ENCODE measurements at regions of chr11 and their contacts with region 1.

Region 1: GRCh38 chr11:22539821-22540256 is 85.8 kb downstream of the FANCF start:
- DNase-seq: peak; percentile 31
- H3K4me3 ChIP-seq: no peak overlapping the region
- H3K27ac ChIP-seq: no peak overlapping the region
- H3K4me1 ChIP-seq: peaks cover 13% of the 10 kb centered on the region
- H3K27me3 ChIP-seq: no peaks in the 10 kb centered on the region
- CTCF ChIP-seq: peak; percentile 83 to 84

Region 2: GRCh38 chr11:22337596-22338485 is 202.0 kb before region 1 on chr11 and contains the start of gene SLC17A6:
- CTCF ChIA-PET with region 1: no interaction called
- dilution Hi-C with region 1: no loop called
- in situ Hi-C with region 1: loop called in 1 of 2 experiments (anchors 10 kb)
- intact Hi-C with region 1: loop called (anchors 1 kb)
- DNase-seq: peak; percentile 31
- H3K4me3 ChIP-seq: no peak within 1 kb of the TSS
- H3K27ac ChIP-seq: no peak within 1 kb of the TSS
- H3K4me1 ChIP-seq: no peaks in the 10 kb centered on the region
- H3K27me3 ChIP-seq: peaks cover 35% of the 10 kb centered on the region
- CTCF ChIP-seq: no peak
- total RNA-seq, gene SLC17A6: not detected

Region 3: GRCh38 chr11:22389526-22390282 is 150.1 kb before region 1 on chr11:
- CTCF ChIA-PET with region 1: no interaction called
- dilution Hi-C with region 1: no loop called
- in situ Hi-C with region 1: no loop called
- intact Hi-C with region 1: no loop called
- DNase-seq: peak; percentile 2
- H3K4me3 ChIP-seq: no peak overlapping the region
- H3K27ac ChIP-seq: no peak overlapping the region
- H3K4me1 ChIP-seq: no peaks in the 10 kb centered on the region
- H3K27me3 ChIP-seq: no peaks in the 10 kb centered on the region
- CTCF ChIP-seq: no peak

Region 4: GRCh38 chr11:22426915-22427314 is 112.9 kb before region 1 on chr11:
- CTCF ChIA-PET with region 1: no interaction called
- dilution Hi-C with region 1: no loop called
- in situ Hi-C with region 1: loop called in 1 of 2 experiments (anchors 10 kb)
- intact Hi-C with region 1: loop called (anchors 1 kb)
- DNase-seq: no peak
- H3K4me3 ChIP-seq: no peak overlapping the region
- H3K27ac ChIP-seq: no peak overlapping the region
- H3K4me1 ChIP-seq: no peaks in the 10 kb centered on the region
- H3K27me3 ChIP-seq: no peaks in the 10 kb centered on the region
- CTCF ChIP-seq: peak in 1 of 2 donors; percentile 49

Region 5: GRCh38 chr11:22472306-22472705 is 67.5 kb before region 1 on chr11:
- CTCF ChIA-PET with region 1: no interaction called
- dilution Hi-C with region 1: no loop called
- in situ Hi-C with region 1: no loop called
- intact Hi-C with region 1: loop called (anchors 2 kb)
- DNase-seq: peak; percentile 26
- H3K4me3 ChIP-seq: no peak overlapping the region
- H3K27ac ChIP-seq: no peak overlapping the region
- H3K4me1 ChIP-seq: peaks cover 6% of the 10 kb centered on the region
- H3K27me3 ChIP-seq: no peaks in the 10 kb centered on the region
- CTCF ChIP-seq: peak; percentile 46 to 52

Region 6: DNA sequence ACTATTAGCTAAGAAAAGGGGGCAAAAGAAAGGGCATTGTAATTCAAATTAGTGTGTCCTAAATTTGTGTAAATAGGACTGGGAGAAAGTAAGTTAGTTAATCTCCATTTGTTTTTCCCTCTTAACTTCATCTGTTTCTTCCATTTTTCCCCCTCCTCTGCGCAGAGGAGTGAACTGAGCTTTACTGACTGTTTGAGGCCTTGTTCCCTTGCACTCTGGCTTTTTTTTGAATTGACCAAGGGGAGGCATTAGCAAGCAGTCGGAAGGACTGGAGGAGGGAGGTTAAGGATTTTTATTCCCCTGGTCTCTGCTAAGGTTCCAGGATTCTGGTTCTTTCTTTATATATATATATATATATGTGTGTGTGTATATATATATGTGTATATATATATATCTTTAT is 101.0 kb after region 1 on chr11:
- CTCF ChIA-PET with region 1: no interaction called
- dilution Hi-C with region 1: no loop called
- in situ Hi-C with region 1: no loop called
- intact Hi-C with region 1: no loop called
- DNase-seq: no peak
- H3K4me3 ChIP-seq: no peak overlapping the region
- H3K27ac ChIP-seq: no peak overlapping the region
- H3K4me1 ChIP-seq: no peaks in the 10 kb centered on the region
- H3K27me3 ChIP-seq: no peaks in the 10 kb centered on the region
- CTCF ChIP-seq: no peak

Measured in mammary epithelial cell (primary cell).